Natural killer cell (primary cell): ENCODE measurements at regions of chr10 and their contacts with region 1.

Region 1: DNA sequence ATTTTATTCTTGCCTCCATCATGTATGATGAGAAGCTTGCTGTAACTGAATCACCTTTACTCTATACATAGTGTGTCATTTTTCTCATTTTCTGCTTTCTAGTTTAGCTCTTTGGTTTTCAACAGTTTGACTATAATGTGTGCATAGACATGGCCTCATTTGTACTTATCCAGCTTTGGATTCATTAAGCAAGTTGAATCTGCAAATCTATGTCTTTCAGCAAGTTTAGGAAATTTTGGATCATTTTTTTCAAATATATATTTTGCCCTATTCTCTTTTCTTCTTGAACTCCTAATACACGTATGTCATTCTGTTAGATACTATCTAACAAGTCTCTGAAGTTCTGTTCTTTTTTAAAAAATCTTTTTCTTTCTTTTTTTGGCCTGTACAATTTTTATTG is 57.8 kb downstream of the PRLHR start:
- DNase-seq: no peak
- ATAC-seq: no peak
- H3K4me3 ChIP-seq: no peak overlapping the region
- H3K4me3 Mint-ChIP-seq: no peak overlapping the region
- H3K27ac ChIP-seq: no peak overlapping the region
- H3K27ac Mint-ChIP-seq: no peak overlapping the region
- H3K4me1 ChIP-seq: no peaks in the 10 kb centered on the region
- H3K4me1 Mint-ChIP-seq: no peaks in the 10 kb centered on the region
- H3K27me3 ChIP-seq: peaks cover 6% of the 10 kb centered on the region
- H3K27me3 Mint-ChIP-seq: peaks cover 22 to 23% of the 10 kb centered on the region in 2 donors
- CTCF ChIP-seq: no peak

Region 2: GRCh38 chr10:118522791-118523498 is 14.7 kb before region 1 on chr10:
- intact Hi-C with region 1: loop called (anchors 2 kb)
- DNase-seq: no peak
- ATAC-seq: no peak
- H3K4me3 ChIP-seq: no peak overlapping the region
- H3K4me3 Mint-ChIP-seq: no peak overlapping the region
- H3K27ac ChIP-seq: no peak overlapping the region
- H3K27ac Mint-ChIP-seq: no peak overlapping the region
- H3K4me1 ChIP-seq: no peaks in the 10 kb centered on the region
- H3K4me1 Mint-ChIP-seq: no peaks in the 10 kb centered on the region
- H3K27me3 ChIP-seq: no peaks in the 10 kb centered on the region
- H3K27me3 Mint-ChIP-seq: peaks cover 18 to 52% of the 10 kb centered on the region in 2 donors
- CTCF ChIP-seq: no peak

Region 3: GRCh38 chr10:118792526-118792925 is 254.9 kb after region 1 on chr10:
- intact Hi-C with region 1: no loop called
- DNase-seq: no peak
- ATAC-seq: peak in 1 of 3 donors; percentile 29
- H3K4me3 ChIP-seq: no peak overlapping the region
- H3K4me3 Mint-ChIP-seq: no peak overlapping the region
- H3K27ac ChIP-seq: no peak overlapping the region
- H3K27ac Mint-ChIP-seq: no peak overlapping the region
- H3K4me1 ChIP-seq: no peaks in the 10 kb centered on the region
- H3K4me1 Mint-ChIP-seq: no peaks in the 10 kb centered on the region
- H3K27me3 ChIP-seq: no peaks in the 10 kb centered on the region
- H3K27me3 Mint-ChIP-seq: peaks cover 27 to 41% of the 10 kb centered on the region in 2 donors
- CTCF ChIP-seq: no peak